Activated CD4-positive, alpha-beta T cell treated with anti-CD3 and anti-CD28 coated beads, Interleukin-2, amount 10 ng/mL, durations not matched to agents 7 days and 5 days (primary cell): ENCODE measurements at regions of chr17 and their contacts with region 1.

Region 1: DNA sequence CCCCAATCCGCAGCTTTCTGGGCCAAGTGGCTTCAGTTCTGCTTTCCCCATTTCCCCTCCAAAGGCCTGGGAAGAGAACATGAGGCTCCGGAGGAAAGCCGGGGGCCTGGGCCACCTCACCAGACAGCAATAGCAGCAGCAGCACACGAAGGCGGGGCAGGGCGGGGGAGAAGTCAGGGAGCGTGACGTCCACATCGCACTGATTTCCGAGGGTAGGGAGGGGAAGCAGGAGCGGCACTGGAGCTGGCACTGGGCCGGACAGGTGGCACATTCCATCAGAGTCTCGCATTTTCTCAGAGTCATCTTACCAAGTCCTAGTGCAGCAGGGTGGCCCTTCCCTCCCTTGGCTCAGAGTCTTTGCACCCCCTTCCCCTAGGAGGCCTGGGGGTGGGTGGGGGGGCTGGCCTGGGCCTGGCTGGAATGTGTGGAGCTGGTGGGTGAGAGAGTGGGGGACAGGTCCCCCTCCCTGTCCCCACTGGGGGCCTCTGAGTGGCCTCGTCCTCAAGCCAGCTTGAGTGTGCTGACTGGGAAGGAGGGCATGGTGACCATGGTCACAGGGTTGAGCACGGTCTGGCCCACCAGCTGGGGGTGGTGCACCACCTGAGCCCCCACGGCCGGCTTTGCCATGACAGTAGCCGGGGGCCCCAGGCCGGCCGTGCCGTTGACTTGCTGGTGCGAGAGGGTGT is 14.3 kb downstream of the MNT start:
- DNase-seq: no peak
- H3K4me3 Mint-ChIP-seq: no peak overlapping the region
- H3K27ac Mint-ChIP-seq: no peak overlapping the region
- H3K4me1 Mint-ChIP-seq: peaks cover 35% of the 10 kb centered on the region
- H3K27me3 Mint-ChIP-seq: no peaks in the 10 kb centered on the region

Region 2: DNA sequence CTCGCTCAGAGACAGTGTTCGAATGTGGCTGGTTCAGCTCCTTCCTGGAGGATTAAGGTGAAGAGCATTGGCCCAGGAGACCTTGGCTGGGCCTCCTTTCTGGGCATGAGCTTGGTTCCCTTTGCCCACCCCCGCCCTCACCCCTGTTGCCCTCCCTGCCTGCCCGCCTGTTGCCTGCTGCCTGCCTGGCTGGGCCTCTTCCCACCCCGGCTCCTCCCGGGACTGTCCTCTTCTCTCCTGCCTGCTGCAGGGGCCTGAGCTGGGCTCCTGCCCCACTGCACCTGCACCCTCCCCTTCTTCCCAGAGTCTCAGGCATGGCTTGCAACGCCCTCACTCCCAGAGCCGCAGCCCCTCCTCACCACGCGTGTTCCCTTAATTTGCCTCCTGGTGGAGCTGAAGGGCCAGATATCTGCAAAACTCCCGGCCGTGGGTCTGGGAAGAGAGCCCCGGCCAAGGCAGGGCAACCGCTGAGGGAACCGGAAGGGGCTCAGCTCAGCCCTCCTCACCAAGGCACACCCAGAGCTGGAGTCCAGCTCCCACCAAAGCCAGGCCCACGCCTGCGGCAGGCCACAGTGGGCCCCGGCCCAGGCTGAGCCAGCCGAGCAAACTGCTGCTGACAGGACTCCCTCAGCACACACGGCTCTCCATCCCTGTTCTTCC is 16.9 kb before region 1 on chr17:
- CTCF ChIA-PET with region 1: interaction called, 15 read pairs
- POLR2A ChIA-PET with region 1: no interaction called
- DNase-seq: no peak
- H3K4me3 Mint-ChIP-seq: no peak overlapping the region
- H3K27ac Mint-ChIP-seq: no peak overlapping the region
- H3K4me1 Mint-ChIP-seq: no peaks in the 10 kb centered on the region
- H3K27me3 Mint-ChIP-seq: no peaks in the 10 kb centered on the region

Region 3: DNA sequence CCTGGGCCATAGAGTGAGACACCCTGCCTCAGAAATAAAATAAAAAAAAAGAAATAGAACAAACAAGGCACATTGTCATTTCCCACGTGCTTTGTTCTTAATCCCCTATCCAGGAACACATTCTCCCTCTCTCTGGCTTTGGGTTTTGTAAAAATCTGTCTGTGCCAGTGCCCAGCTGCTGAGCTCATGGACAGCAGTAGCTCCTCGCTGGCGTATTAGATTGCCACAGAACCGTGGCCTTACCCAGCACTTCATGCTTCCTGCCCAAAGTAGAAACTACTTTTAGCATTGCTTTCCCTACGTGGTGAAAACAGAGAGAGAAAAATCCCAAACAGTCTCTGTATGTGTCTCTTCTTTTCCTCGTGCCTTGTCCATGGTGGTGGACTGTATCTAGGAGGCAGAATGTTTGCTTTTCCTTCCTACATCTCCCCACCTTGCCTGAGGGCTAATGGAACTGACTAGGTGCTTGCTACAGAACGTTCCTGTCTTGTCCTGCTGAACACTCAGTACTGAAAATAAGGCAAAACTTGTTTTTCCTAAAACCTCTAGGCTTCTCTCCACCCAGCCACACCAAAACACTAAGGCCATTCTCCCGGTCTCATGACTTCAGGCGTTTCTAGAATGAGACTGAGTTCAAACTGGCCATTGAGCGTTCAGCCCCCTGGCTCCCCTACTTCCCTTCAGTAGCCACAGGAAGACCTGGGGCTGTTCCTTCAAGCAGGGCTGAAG is 11.8 kb before region 1 on chr17:
- CTCF ChIA-PET with region 1: interaction called, 15 read pairs
- POLR2A ChIA-PET with region 1: no interaction called
- DNase-seq: no peak
- H3K4me3 Mint-ChIP-seq: no peak overlapping the region
- H3K27ac Mint-ChIP-seq: peak overlapping the region; percentile 74
- H3K4me1 Mint-ChIP-seq: no peaks in the 10 kb centered on the region
- H3K27me3 Mint-ChIP-seq: no peaks in the 10 kb centered on the region

Region 4: DNA sequence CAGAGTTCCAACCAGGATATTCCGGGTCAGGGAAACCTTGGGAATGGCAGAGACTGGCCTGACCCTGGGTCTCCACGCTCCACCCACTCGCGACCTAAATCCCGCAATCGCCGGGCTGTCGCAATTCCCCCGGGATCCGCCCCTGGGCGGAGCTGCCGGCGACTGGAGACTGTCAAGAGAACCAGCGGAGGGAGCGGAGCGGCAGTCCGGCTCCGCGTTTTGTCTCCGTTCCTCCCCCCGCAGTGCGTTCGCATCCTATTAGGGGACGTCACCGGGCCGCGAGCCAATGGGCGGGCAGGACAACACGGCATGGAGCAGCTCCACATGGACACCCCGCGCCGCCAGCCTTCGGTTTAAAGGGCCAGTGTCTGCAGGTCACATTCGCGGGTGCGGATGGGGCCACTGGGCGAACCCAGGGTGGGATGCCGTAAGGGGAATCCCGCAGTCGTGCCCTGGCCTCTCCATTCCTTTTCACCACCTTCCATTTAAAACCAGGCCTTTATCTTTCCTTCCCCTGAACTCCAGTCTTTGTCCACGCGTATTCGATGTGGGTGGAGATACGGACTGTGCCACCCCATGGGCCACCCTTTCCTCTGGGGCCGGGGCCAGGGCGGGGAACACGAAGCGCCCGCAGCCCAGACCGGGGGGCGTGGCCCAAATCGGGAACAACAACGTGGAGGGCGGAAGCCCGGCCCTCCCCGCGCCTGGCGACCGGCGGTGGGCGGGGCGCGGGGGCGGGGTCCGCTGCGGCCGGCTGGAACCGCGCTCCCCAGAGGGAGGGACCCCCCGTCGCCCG is 15.1 kb after region 1 on chr17:
- CTCF ChIA-PET with region 1: interaction called, 28 read pairs
- POLR2A ChIA-PET with region 1: interaction called, 6 read pairs
- DNase-seq: peak; percentile 99
- H3K4me3 Mint-ChIP-seq: peak overlapping the region; percentile 88
- H3K27ac Mint-ChIP-seq: peak overlapping the region; percentile 100
- H3K4me1 Mint-ChIP-seq: peaks cover 51% of the 10 kb centered on the region
- H3K27me3 Mint-ChIP-seq: no peaks in the 10 kb centered on the region

Region 5: GRCh38 chr17:2406903-2407790 is 20.6 kb after region 1 on chr17:
- CTCF ChIA-PET with region 1: interaction called, 28 read pairs
- POLR2A ChIA-PET with region 1: no interaction called
- DNase-seq: no peak
- H3K4me3 Mint-ChIP-seq: no peak overlapping the region
- H3K27ac Mint-ChIP-seq: no peak overlapping the region
- H3K4me1 Mint-ChIP-seq: peaks cover 31% of the 10 kb centered on the region
- H3K27me3 Mint-ChIP-seq: no peaks in the 10 kb centered on the region

Region 6: DNA sequence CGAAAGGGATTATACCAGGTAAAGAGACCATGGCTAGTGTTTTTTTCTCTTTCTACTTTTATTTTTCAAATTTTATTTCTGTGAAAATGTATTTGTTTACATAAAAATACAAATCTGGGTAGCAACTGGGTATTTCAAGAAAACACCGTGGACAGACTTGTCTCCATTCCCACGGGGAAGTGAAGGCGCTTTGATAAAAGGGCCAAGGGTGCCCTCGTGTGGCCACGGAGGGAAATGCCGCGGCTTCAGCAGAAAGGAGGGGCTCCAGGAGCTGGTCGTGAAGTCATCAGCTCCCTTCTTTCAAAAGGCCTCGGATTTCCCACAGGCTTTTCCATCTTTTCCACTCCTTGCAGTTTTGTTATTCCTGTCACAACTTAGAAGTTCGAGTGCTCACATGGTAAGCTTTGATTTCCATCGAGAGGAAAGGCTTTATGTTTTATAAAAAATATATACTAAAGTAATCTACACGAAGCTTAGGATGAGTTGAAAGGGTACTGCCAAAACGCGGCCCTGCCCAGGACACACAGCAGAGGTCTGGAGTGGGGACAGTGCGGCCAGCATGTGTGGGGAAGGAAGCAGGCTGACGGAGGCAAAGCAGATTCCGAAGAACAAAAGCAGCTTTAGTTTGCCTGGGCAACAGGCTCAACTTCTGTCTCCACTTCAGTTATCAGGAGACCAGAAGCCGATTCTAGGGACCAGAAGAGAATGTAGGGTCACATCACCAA is 29.6 kb after region 1 on chr17:
- CTCF ChIA-PET with region 1: interaction called, 131 read pairs
- POLR2A ChIA-PET with region 1: interaction called, 10 read pairs
- DNase-seq: peak; percentile 87
- H3K4me3 Mint-ChIP-seq: no peak overlapping the region
- H3K27ac Mint-ChIP-seq: peak overlapping the region; percentile 5
- H3K4me1 Mint-ChIP-seq: no peaks in the 10 kb centered on the region
- H3K27me3 Mint-ChIP-seq: no peaks in the 10 kb centered on the region